ENCODE measurements at regions of chr9 and their contacts with region 1.

Region 1: DNA sequence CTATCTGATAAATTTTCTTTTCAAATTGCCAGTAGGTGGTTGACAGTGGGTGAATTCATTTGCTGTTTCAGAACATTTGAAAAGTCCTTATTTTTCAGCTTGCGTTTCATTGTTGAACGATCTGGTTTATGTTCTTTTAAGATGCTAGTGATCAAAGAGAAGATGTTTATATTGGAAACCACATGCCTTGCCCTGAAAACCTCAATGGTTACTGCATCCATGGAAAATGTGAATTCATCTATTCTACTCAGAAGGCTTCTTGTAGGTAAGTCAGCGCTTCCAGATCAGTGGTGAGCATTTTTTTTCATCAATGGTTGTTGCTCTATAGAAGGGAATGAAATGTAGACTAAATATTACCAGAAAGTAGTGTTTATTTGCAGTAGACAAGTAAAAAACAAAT is 16.6 kb upstream of the CAVIN4 start:
- DNase-seq: no peak
- H3K4me3 ChIP-seq: no peak overlapping the region
- H3K27ac ChIP-seq: no peak overlapping the region
- H3K4me1 ChIP-seq: no peaks in the 10 kb centered on the region
- H3K27me3 ChIP-seq: no peaks in the 10 kb centered on the region
- CTCF ChIP-seq: no peak
- EP300 ChIP-seq: no peak
- POLR2A ChIP-seq: no peak

Region 2: GRCh38 chr9:99299211-99300102 is 1261.8 kb before region 1 on chr9:
- in situ Hi-C with region 1: no loop called
- intact Hi-C with region 1: loop called (anchors 5 kb)
- DNase-seq: no peak
- H3K4me3 ChIP-seq: no peak overlapping the region
- H3K27ac ChIP-seq: no peak overlapping the region
- H3K4me1 ChIP-seq: no peaks in the 10 kb centered on the region
- H3K27me3 ChIP-seq: no peaks in the 10 kb centered on the region
- CTCF ChIP-seq: no peak
- EP300 ChIP-seq: no peak
- POLR2A ChIP-seq: no peak

Measured in transverse colon (tissue), 4 donors.